ENCODE measurements at regions of chr12 and their contacts with region 1.

Region 1: GRCh38 chr12:105575235-105575634 is 244.7 kb downstream of the C12orf75 start:
- DNase-seq: no peak
- ATAC-seq: no peak
- H3K4me3 ChIP-seq: no peak overlapping the region
- H3K27ac ChIP-seq: no peak overlapping the region
- H3K4me1 ChIP-seq: no peaks in the 10 kb centered on the region
- CTCF ChIP-seq: no peak
- EP300 ChIP-seq: no peak
- POLR2A ChIP-seq: no peak
- RAD21 ChIP-seq: no peak

Region 2: DNA sequence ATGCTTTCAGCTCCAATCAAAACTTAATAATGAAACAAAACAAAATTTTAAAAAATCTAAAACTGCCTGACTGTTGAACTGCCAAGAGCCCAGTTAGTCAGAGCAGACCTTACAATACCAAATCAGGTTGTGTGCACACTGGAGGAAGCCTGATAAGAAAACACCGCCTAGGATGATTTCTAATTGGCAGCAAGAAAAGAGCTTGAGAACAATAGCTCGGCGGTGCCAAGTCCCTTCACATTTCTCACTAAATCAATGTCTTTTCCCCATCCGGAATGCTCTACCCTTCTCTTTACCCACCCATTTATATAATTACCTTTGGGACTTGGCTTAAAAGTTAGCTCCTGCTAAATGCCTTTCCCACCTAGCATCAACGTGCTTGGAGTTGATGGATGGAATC is 12.0 kb after region 1 on chr12:
- CTCF ChIA-PET with region 1: interaction called, 15 read pairs
- POLR2A ChIA-PET with region 1: no interaction called
- DNase-seq: no peak
- ATAC-seq: no peak
- H3K4me3 ChIP-seq: no peak overlapping the region
- H3K27ac ChIP-seq: no peak overlapping the region
- H3K4me1 ChIP-seq: no peaks in the 10 kb centered on the region
- CTCF ChIP-seq: no peak
- EP300 ChIP-seq: no peak
- POLR2A ChIP-seq: no peak
- RAD21 ChIP-seq: no peak

Region 3: DNA sequence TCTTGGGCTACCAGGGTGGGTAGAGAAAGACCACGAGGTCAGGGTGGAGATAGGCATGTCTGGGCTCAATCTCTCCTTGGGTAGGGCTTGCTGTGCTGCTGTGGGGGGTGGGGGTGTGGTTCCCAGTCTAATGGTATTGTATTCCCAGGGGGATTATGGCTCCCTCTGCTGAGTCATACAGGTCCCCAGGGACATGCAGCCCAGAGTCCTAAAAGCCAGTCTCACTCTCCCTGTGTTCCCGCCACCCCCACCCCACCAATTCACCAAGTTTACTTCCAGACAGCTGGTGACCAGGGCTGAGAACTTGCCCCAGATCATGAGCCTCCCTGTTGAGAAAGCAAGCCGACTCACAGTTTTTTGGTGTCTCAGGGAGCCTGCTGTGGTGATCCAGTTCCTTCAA is 122.8 kb after region 1 on chr12:
- CTCF ChIA-PET with region 1: no interaction called
- POLR2A ChIA-PET with region 1: no interaction called
- DNase-seq: no peak
- ATAC-seq: no peak
- H3K4me3 ChIP-seq: no peak overlapping the region
- H3K27ac ChIP-seq: no peak overlapping the region
- H3K4me1 ChIP-seq: no peaks in the 10 kb centered on the region
- CTCF ChIP-seq: no peak
- EP300 ChIP-seq: no peak
- POLR2A ChIP-seq: no peak
- RAD21 ChIP-seq: no peak